Spleen (tissue), 13 donors: ENCODE measurements at regions of chr4 and their contacts with region 1.

Region 1: DNA sequence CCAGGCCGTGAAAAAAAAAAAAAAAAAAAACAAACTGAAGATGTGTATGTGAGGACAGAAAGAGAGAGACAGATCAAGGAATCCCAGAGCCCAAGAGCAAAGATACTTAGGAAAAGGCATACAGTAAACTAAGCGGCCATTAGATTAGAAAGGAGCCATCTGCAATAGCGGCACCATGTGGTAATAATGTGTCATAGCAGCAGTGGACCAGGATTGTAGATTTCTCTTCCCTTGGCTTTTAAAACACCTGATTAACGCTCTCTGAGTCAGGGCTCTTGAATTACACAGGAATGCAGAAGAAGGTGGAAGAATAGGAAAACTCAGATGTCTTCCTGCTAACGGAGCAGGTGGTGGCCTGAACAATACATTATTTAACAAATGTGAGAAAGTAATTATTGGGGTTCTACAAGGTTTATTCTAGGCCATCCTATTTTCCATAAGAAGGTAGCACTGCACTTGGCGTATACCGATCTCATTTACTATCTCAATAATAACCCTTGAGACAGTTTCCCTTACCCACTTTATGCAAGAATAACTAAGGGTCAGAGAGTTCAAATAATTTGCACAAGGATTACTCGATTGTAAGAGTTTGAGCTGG is 182.7 kb downstream of the KCNIP4 start:
- DNase-seq: no peak
- H3K4me3 ChIP-seq: no peak overlapping the region
- H3K27ac ChIP-seq: no peak overlapping the region
- H3K4me1 ChIP-seq: peaks cover 0 to 3% (median 0%) of the 10 kb centered on the region in 6 donors
- H3K27me3 ChIP-seq: no peaks in the 10 kb centered on the region
- CTCF ChIP-seq: peak in 9 of 11 experiments; percentile 44 to 76 (median 69)
- POLR2A ChIP-seq: no peak

Region 2: DNA sequence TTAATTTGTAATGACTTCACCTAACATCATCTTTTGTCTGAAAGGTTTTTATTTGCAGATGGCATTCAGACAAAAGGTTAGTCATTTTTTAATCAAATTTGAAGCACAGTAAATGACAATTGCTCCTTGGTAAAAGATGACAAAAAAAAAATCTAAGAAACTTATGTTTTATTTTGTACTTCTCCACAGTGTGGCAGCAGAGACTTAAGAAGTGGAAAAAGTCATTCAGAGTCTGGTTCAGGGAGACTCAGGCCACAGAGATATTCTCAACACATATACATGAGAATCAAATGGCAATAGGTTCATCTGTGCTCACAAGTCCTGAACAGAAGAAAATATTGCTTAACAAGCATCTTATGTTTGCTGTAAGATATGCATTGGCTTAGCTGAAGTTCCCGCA is 253.6 kb before region 1 on chr4:
- intact Hi-C with region 1: loop called (anchors 10 kb)
- DNase-seq: no peak
- H3K4me3 ChIP-seq: no peak overlapping the region
- H3K27ac ChIP-seq: no peak overlapping the region
- H3K4me1 ChIP-seq: no peaks in the 10 kb centered on the region
- H3K27me3 ChIP-seq: no peaks in the 10 kb centered on the region
- CTCF ChIP-seq: no peak
- POLR2A ChIP-seq: no peak